ENCODE measurements at regions of chr5 and their contacts with region 1.

Region 1: DNA sequence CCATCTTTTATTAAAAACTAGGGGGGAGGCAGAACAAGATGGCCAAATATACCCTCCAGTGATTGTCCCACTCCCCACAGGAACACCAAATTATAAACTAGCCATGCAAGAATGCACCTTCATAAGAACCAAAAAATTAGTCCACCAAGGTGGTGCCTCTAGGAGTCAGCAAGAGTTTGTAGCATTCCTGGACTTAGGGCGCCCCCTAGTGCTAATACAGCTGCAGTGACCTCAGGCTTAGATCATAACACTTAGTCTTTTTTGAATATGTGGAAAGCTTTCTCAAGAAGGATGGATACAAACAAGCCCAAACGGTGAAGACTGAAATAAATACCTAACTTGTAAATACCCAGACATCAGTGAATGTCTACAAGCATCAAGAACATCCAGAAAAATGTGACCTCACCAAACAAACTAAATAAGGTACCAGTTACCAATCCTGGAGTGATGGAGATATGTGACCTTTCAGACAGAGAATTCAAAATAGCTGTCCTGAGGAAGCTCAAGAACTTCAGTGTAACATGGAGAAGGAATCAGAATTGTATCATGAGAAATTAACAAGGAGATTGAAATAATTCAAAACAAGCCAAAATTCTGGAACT is 19.3 kb downstream of the PPIP5K2 start:
- DNase-seq: peak; percentile 92
- H3K4me3 Mint-ChIP-seq: no peak overlapping the region
- H3K27ac Mint-ChIP-seq: no peak overlapping the region
- H3K4me1 Mint-ChIP-seq: peaks cover 5% of the 10 kb centered on the region
- H3K27me3 Mint-ChIP-seq: no peaks in the 10 kb centered on the region

Region 2: GRCh38 chr5:102536323-102536928 is 602.9 kb before region 1 on chr5:
- CTCF ChIA-PET with region 1: no interaction called
- intact Hi-C with region 1: loop called (anchors 1 kb)
- DNase-seq: no peak
- H3K4me3 Mint-ChIP-seq: no peak overlapping the region
- H3K27ac Mint-ChIP-seq: no peak overlapping the region
- H3K4me1 Mint-ChIP-seq: no peaks in the 10 kb centered on the region
- H3K27me3 Mint-ChIP-seq: peaks cover 4% of the 10 kb centered on the region

Region 3: DNA sequence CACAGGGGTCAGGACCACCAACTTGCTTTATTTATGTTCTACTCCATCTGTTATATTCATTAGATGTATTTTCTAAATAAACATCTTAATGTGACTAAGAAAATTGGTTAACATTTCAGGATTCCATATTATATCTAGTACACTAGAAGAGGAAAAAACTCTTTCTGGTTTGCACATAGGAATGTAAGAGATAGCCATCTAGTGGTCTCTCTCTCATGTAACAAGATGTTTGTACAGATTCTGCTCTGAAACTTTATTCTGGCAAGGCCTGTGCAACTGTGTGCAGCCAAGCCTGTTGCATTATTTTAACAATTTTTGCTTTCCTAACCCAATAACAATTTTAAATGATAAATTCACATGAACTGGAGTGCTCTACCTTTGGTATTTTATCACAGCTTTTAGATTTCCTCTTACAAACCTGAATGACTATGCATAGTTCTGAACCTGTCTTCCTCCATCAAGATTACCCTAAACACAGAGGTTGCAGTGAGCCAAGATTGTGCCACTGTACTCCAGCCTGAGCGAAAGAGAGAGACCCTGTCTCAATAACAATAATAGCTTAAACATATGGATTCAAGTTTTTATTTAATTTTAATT is 167.6 kb before region 1 on chr5:
- CTCF ChIA-PET with region 1: interaction called, 5 read pairs
- intact Hi-C with region 1: loop called (anchors 5 kb)
- DNase-seq: no peak
- H3K4me3 Mint-ChIP-seq: no peak overlapping the region
- H3K27ac Mint-ChIP-seq: no peak overlapping the region
- H3K4me1 Mint-ChIP-seq: no peaks in the 10 kb centered on the region
- H3K27me3 Mint-ChIP-seq: no peaks in the 10 kb centered on the region

Region 4: GRCh38 chr5:103057208-103058130 is 81.9 kb before region 1 on chr5:
- CTCF ChIA-PET with region 1: no interaction called
- intact Hi-C with region 1: loop called (anchors 5 kb)
- DNase-seq: no peak
- H3K4me3 Mint-ChIP-seq: no peak overlapping the region
- H3K27ac Mint-ChIP-seq: no peak overlapping the region
- H3K4me1 Mint-ChIP-seq: no peaks in the 10 kb centered on the region
- H3K27me3 Mint-ChIP-seq: no peaks in the 10 kb centered on the region

Region 5: DNA sequence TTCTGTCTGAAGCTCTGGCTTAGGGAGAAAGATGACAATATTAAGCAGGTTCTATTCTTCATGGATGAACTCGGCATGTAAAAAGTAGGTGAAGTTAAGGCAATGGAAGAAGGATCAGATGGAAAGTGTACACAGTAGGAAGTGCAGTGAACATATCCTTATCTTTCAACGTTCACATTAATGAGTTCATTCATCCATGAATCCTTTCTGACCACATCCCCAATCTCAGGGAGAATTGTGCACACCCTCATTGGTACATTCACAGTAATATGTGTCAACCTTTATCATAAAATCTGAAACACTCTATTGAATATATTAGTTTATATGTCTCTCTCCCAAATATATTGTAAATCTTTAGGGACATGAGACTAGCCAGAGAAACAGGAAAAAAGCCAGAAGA is 24.9 kb before region 1 on chr5:
- CTCF ChIA-PET with region 1: no interaction called
- intact Hi-C with region 1: no loop called
- DNase-seq: no peak
- H3K4me3 Mint-ChIP-seq: no peak overlapping the region
- H3K27ac Mint-ChIP-seq: no peak overlapping the region
- H3K4me1 Mint-ChIP-seq: peaks cover 40% of the 10 kb centered on the region
- H3K27me3 Mint-ChIP-seq: no peaks in the 10 kb centered on the region

Region 6: GRCh38 chr5:103475629-103476240 is 336.4 kb after region 1 on chr5:
- CTCF ChIA-PET with region 1: no interaction called
- intact Hi-C with region 1: loop called (anchors 5 kb)
- DNase-seq: no peak
- H3K4me3 Mint-ChIP-seq: no peak overlapping the region
- H3K27ac Mint-ChIP-seq: no peak overlapping the region
- H3K4me1 Mint-ChIP-seq: no peaks in the 10 kb centered on the region
- H3K27me3 Mint-ChIP-seq: no peaks in the 10 kb centered on the region

Region 7: DNA sequence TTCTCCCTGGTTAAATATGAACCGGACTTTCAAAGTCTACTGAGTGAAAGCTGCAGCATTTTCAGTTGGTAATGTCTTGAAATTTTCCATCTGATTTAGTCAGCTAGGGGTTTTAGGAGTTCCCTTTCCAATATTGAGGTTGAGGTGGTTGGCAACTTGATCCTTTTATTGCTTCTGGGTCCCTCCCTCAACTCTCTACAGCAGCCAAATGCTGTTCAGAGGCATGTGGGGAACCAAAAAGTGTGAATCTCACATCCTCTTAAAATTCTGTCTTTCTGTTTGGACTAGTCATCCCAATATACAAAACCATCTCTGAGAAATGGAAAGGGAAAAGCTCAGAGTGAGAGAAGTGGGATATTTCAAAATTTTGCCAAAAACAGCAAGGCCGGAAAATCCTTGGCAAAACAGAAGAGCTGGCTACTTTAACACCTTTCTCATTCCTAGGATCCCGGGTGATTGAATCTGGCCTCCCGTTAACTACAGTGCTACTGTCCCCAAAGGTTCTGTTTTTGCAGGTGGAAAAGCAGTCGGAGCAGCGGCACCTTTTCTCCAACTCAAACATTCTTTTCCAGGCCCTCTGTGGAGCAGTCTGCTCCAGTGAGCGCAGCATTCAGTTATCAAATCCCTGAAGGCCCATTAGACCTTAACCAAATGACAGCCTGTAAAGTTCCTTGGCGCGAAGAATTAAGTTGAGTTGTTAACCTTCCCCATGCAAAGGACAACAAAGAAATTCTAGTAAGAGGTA is 769.1 kb after region 1 on chr5:
- CTCF ChIA-PET with region 1: no interaction called
- intact Hi-C with region 1: no loop called
- DNase-seq: no peak
- H3K4me3 Mint-ChIP-seq: no peak overlapping the region
- H3K27ac Mint-ChIP-seq: no peak overlapping the region
- H3K4me1 Mint-ChIP-seq: no peaks in the 10 kb centered on the region
- H3K27me3 Mint-ChIP-seq: no peaks in the 10 kb centered on the region